Activated T-helper 1 cell treated with anti-CD3 and anti-CD28 coated beads, Interleukin-12 subunit alpha, Interleukin-12 subunit beta, Interleukin-2, Interleukin-4 antibody, amounts not matched to agents 30 ng/mL and 10 ng/mL and 1 ng/mL, durations not matched to agents 14 hours and 24 hours and 36 hours (primary cell): ENCODE measurements at regions of chr1 and their contacts with region 1.

Region 1: DNA sequence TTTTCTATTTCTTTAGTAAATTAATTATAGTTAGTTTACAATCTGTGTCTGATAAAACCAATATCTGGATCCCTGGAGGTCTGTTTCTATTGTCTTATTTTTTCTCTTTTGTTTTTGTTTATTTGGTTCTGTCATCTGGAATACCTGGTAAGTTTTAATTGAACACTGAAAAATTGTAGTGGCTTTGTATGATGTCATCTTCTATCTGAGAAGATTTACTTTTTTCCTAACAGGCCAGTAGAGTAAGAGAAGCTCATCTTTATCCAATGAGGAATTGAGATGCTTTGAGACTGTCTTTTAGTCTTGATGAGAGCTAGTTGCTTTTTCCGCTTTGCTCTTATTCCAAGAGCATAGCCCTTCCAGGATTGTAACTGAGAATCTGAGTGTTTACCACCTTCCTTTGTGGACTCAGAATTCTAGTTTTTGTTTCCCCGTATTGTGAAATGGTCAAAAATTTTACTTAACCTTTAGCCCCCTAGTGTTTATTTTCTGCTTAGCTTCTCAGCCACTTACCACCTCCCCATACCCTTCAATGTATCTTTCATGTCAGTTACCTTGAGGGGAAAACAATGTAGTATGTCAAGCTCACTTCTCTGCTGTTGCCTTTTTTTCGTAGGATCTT is 25.0 kb downstream of the PTGFRN start:
- DNase-seq: no peak
- H3K4me3 Mint-ChIP-seq: peak overlapping the region; percentile 25
- H3K27ac Mint-ChIP-seq: peak overlapping the region; percentile 75
- H3K4me1 Mint-ChIP-seq: peaks cover 27% of the 10 kb centered on the region
- H3K27me3 Mint-ChIP-seq: no peaks in the 10 kb centered on the region

Region 2: DNA sequence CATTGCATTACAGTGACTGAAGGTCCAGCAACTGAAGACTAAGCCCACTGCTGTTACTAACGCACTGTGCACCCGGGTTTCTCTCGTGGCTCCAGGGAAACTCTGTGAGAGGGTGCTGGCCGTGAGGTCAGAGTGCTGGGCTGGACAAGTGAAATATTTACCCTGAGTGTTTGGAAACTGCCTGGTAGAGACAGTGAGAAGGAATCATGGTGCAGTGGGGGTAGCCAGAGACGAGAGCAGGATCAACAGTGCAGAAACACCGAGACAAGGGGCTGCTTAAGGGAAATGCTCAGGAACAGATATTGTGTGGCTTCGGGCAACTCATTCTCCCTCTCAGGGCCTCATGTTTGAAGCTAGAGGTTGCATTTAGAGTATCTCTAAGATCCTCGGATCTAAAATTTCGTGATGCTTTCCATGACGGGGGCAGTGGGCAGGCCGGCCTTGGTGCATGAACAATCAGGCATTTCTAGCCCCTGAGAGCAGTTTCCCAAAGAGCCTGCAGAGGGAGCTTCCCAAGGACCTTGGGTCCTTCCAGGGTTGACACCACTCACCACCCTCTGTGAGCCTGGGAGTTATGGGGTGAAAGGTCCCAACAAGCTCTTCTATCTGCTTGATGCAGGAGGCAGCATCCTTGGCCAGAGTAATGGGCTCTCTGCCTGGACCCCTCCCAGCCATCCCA is 170.8 kb before region 1 on chr1:
- intact Hi-C with region 1: loop called (anchors 1 kb)
- DNase-seq: peak; percentile 50
- H3K4me3 Mint-ChIP-seq: peak overlapping the region; percentile 84
- H3K27ac Mint-ChIP-seq: peak overlapping the region; percentile 100
- H3K4me1 Mint-ChIP-seq: peaks cover 95% of the 10 kb centered on the region
- H3K27me3 Mint-ChIP-seq: peaks cover 3% of the 10 kb centered on the region

Region 3: DNA sequence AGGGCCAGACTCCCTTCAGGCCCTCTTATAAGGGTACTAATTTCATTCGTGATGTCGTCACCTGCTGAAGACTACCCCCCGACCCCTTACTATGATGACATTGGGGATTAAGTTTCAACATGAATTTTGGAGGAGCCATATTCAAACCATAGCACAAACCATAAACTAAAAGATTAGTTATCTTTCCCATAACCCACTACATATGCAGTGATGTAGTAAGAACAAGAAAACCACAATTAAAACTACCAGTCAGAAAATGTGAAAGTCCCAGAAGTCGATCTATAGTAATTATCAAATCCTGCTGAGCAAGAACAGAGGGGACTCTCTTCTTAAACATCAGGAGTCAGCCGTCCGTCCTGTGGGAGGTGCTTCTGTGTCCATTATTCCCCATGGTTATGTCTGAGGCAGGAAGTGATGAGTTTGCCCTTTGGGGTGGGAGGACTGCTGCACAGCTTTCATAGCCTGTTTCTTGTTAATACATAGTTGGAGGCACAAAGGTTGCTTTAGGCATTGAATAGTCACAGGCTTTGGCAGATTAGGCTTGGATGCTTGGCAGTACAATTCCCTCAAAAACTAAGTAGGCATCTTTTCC is 60.9 kb before region 1 on chr1:
- intact Hi-C with region 1: loop called (anchors 2 kb)
- DNase-seq: no peak
- H3K4me3 Mint-ChIP-seq: peak overlapping the region; percentile 3
- H3K27ac Mint-ChIP-seq: peak overlapping the region; percentile 13
- H3K4me1 Mint-ChIP-seq: peaks cover 19% of the 10 kb centered on the region
- H3K27me3 Mint-ChIP-seq: no peaks in the 10 kb centered on the region

Region 4: DNA sequence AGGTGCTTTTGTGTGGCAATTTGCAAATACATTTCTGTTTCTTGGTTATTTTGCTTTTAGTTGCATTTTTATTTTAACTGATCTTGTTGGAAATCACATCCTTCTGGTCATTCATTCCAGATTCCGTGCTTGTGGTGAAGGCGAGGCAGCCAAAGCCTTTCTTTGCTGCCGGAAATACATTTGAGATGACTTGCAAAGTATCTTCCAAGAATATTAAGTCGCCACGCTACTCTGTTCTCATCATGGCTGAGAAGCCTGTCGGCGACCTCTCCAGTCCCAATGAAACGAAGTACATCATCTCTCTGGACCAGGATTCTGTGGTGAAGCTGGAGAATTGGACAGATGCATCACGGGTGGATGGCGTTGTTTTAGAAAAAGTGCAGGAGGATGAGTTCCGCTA is 32.1 kb after region 1 on chr1:
- intact Hi-C with region 1: loop called (anchors 5 kb)
- DNase-seq: no peak
- H3K4me3 Mint-ChIP-seq: no peak overlapping the region
- H3K27ac Mint-ChIP-seq: no peak overlapping the region
- H3K4me1 Mint-ChIP-seq: no peaks in the 10 kb centered on the region
- H3K27me3 Mint-ChIP-seq: no peaks in the 10 kb centered on the region

Region 5: DNA sequence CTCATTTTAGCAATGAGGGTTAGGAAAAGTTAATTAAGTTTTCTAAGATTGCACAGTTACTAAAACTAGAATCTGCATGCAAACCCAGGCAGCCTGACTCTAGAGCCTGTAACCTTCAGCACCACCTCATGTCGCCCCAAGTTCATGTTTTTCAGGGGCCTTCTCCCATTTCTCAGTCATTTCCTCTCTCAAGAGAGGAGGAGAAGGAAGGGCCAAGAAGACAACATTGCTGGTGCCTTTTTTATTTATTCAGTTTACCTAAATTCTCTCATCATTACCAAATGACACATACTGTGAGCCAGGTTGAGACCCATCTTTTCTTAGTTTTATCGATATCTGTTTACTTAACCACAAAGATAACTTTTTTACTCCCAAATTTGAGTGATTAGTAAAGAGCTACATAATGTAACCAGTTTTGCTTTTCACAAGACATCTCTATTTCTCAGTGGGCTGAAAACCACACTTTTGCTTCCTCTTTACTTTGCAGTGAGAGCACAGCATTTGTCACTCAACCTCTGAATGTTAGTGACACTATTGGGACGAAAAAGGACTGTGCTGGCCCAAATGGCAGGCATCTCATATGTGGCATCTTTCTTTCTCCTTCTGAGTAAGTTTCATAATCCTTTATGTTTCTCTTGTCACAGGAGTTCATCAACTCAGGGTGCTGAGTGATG is 66.7 kb after region 1 on chr1 and contains the start of gene CD101:
- intact Hi-C with region 1: loop called (anchors 5 kb)
- DNase-seq: no peak
- H3K4me3 Mint-ChIP-seq: peak within 1 kb of the TSS; percentile 3
- H3K27ac Mint-ChIP-seq: peak within 1 kb of the TSS; percentile 79
- H3K4me1 Mint-ChIP-seq: peaks cover 36% of the 10 kb centered on the region
- H3K27me3 Mint-ChIP-seq: peaks cover 3% of the 10 kb centered on the region
- total RNA-seq, gene CD101: 0.80 and 1.0 TPM in 2 replicates